PC-9 (cell line): ENCODE measurements at regions of chr12 and their contacts with region 1.

Region 1: GRCh38 chr12:62625228-62625627 is 158.6 kb downstream of the MON2 start:
- DNase-seq: no peak
- H3K4me3 ChIP-seq: no peak overlapping the region
- H3K27ac ChIP-seq: no peak overlapping the region
- H3K4me1 ChIP-seq: no peaks in the 10 kb centered on the region
- H3K27me3 ChIP-seq: no peaks in the 10 kb centered on the region
- CTCF ChIP-seq: no peak

Region 2: DNA sequence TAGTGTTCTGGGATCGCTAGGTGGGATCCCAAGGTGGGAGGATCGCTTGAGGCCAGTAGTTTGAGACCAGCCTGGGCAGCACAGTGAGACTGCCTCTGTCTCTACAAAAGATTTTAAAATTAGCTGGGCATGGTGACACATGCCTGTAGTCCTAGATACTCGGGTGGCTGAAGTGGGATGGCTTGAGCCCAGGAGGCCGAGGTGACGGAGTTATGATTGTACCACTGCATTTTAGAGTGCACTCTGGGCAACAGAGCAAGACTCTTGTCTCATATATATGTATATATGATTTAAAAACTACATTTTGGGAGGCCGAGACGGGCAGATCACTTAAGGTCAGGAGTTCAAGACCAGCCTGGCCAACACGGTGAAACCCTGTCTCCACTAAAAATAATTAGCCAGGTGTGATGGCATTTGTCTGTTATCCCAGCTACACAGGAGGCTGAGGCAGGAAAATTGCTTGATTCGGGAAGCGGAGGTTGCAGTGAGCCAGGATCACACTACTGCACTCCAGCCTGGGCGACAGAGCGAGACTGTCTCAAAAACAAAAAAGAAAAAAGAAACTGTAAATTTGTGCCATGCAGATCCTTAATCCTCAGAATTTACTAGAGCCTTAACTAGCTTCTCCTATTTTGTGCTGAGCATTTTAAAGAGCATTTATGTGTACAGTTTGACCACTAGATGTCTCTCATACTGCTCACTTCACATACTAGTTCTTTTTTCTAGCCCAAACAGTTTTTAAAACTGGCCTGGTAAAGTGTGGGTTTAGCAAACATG is 43.8 kb before region 1 on chr12:
- CTCF ChIA-PET with region 1: no interaction called
- POLR2A ChIA-PET with region 1: no interaction called
- intact Hi-C with region 1: no loop called
- DNase-seq: peak in 1 of 2 experiments; percentile 45
- H3K4me3 ChIP-seq: no peak overlapping the region
- H3K27ac ChIP-seq: no peak overlapping the region
- H3K4me1 ChIP-seq: no peaks in the 10 kb centered on the region
- H3K27me3 ChIP-seq: no peaks in the 10 kb centered on the region
- CTCF ChIP-seq: peak; percentile 80

Region 3: DNA sequence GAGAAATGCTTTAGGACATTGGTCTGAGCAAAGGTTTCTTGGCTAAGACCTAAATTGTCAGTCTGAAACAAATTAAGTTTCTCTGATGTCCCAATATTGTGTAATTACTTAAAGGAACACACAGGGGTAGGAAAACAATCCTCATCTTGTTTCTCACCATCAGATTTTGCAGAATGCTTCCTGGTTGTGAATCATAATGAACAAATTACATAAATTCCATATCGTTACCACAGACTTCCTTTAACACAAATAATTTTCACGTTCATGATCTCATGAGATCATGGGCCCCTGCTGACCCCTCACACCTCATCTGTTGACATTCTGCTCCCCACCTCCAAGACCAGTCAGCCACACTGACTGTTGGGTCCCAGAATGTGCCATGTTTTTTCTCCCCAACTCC is 35.5 kb after region 1 on chr12:
- CTCF ChIA-PET with region 1: no interaction called
- POLR2A ChIA-PET with region 1: interaction called, 10 read pairs
- intact Hi-C with region 1: no loop called
- DNase-seq: peak; percentile 28 to 97
- H3K4me3 ChIP-seq: no peak overlapping the region
- H3K27ac ChIP-seq: peak overlapping the region; percentile 98
- H3K4me1 ChIP-seq: peaks cover 23% of the 10 kb centered on the region
- H3K27me3 ChIP-seq: no peaks in the 10 kb centered on the region
- CTCF ChIP-seq: no peak